ENCODE measurements at regions of chr9 and their contacts with region 1.

Region 1: GRCh38 chr9:114894801-114895433 is 35.5 kb downstream of the TNFSF8 start:
- DNase-seq: peak; percentile 77
- ATAC-seq: peak; percentile 76
- H3K4me3 Mint-ChIP-seq: peak overlapping the region; percentile 14
- H3K27ac Mint-ChIP-seq: peak overlapping the region; percentile 90
- H3K4me1 Mint-ChIP-seq: peaks cover 21% of the 10 kb centered on the region
- H3K27me3 Mint-ChIP-seq: no peaks in the 10 kb centered on the region

Region 2: DNA sequence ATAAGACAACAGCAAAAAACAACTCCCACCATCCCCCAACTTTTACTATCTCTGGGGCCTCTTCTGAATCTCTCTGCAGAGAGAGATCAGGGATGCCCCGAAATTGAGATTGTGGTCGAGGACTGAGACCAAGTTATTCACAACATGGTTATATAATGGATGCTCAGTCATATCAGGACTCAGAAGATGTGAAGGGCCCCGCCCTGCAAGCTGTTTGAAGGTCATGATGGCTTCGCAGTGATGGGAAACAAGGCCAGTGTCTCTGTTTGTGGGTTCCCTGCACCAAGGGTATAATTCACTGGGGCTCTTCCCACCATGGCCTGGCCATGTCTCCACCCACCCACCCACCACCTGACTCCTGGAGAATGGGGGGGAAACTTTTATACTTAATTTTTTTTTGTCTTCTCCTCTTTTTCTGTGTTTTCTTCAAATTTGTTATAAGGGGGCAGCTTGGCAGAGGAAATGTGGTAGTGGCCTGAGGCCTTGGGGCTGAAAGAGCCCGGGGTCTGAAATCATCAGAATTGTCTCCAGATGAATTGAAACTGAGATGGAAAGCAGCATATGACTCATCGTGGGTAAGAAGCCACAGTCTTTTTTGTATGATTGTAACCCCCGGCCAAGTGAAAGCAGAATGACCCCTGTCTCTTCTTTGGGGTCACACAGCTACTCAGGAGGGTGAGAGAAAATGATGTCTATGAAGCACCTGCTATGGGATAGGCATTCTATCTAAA is 197.9 kb before region 1 on chr9:
- CTCF ChIA-PET with region 1: interaction called, 3 read pairs
- POLR2A ChIA-PET with region 1: interaction called, 15 read pairs
- intact Hi-C with region 1: loop called in 1 of 2 experiments (anchors 1 kb)
- DNase-seq: peak; percentile 86
- ATAC-seq: peak; percentile 49
- H3K4me3 Mint-ChIP-seq: peak overlapping the region; percentile 28
- H3K27ac Mint-ChIP-seq: peak overlapping the region; percentile 89
- H3K4me1 Mint-ChIP-seq: peaks cover 89% of the 10 kb centered on the region
- H3K27me3 Mint-ChIP-seq: no peaks in the 10 kb centered on the region

Region 3: DNA sequence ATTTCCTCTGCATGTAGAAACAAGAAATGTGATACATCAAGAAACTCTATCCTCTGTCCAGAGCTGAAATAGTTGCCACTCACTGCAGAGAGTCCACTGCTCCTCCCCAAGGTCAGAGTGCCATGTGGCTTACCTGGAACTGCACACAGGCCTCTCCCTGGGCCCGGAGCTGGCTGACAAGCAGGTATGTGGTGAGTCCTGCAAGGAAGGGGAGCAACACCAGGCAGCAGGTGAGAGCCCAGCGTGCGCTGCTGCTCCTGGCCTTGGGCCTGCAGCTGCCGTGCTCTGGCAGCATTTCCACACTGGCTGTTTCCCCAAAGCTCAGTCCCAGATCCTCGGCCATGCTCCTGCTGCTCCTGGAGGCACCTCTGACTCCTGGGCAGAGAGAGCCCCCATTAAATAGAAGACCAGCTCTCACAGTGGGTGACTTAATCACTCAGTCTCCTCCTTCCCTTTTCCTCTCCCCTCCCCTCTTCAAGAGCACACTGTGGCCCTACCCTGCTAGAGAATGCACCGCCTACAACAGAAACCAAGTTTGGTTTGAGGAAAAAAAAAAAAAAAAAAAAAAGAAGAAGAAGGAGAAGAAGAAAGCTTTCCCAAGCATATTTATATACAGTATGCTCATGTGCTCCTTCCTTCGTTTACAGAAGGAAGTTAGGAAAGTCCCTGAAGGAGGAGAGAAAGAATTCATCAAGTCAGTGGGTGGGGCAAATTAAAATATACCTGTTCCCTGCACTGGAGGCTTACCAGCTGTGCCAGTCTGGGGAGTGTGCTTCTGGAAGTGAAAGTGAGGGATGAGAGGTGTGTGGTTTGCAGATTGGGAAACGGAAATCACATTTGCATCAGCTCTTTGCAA is 89.0 kb before region 1 on chr9 and contains the start of gene TNFSF15:
- CTCF ChIA-PET with region 1: no interaction called
- POLR2A ChIA-PET with region 1: no interaction called
- intact Hi-C with region 1: loop called in 1 of 2 experiments (anchors 5 kb)
- DNase-seq: peak; percentile 64
- ATAC-seq: peak; percentile 85
- H3K4me3 Mint-ChIP-seq: peak within 1 kb of the TSS; percentile 43
- H3K27ac Mint-ChIP-seq: peak within 1 kb of the TSS; percentile 68
- H3K4me1 Mint-ChIP-seq: peaks cover 25% of the 10 kb centered on the region
- H3K27me3 Mint-ChIP-seq: peaks cover 3% of the 10 kb centered on the region
- total RNA-seq, gene TNFSF15: 0.47 to 0.50 TPM

Region 4: GRCh38 chr9:114850871-114851270 is 44.0 kb before region 1 on chr9:
- CTCF ChIA-PET with region 1: no interaction called
- POLR2A ChIA-PET with region 1: no interaction called
- intact Hi-C with region 1: loop called in 1 of 2 experiments (anchors 2 kb)
- DNase-seq: peak; percentile 52
- ATAC-seq: peak; percentile 80
- H3K4me3 Mint-ChIP-seq: no peak overlapping the region
- H3K27ac Mint-ChIP-seq: peak overlapping the region; percentile 61
- H3K4me1 Mint-ChIP-seq: peaks cover 26% of the 10 kb centered on the region
- H3K27me3 Mint-ChIP-seq: no peaks in the 10 kb centered on the region

Region 5: DNA sequence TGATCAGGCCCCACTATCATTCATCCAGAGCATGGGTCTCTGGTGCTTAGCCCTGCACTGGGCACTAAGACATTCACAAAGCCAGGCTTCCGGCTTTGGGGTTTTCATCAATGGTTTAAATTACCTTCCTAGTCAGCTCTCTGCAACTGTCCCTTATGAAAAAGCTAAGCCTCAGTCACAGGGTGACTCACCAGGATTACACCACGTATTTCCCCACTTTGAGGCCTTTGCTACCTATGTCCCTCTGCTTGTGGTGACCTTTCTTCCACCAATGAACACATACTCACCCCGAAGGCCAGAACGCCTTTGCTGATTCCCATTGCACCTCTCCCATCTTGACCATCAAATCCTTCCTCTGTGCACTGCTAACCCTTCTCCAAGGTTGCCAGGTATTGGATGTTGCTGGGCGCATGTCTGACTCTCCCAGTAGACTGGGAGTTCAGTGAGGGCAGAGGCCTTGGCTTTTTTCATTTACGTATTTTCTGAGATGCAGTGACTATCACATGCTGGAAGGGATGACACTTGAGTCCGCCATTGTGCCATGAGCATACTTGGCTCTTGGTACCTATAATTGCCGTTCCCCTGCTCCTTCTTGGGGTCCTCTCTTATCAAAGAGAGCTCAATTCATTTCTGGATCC is 94.2 kb after region 1 on chr9:
- CTCF ChIA-PET with region 1: interaction called, 5 read pairs
- POLR2A ChIA-PET with region 1: interaction called, 10 read pairs
- intact Hi-C with region 1: loop called in 1 of 2 experiments (anchors 1 kb)
- DNase-seq: peak; percentile 64
- ATAC-seq: peak; percentile 63
- H3K4me3 Mint-ChIP-seq: peak overlapping the region; percentile 19
- H3K27ac Mint-ChIP-seq: peak overlapping the region; percentile 95
- H3K4me1 Mint-ChIP-seq: peaks cover 68% of the 10 kb centered on the region
- H3K27me3 Mint-ChIP-seq: no peaks in the 10 kb centered on the region

Region 6: DNA sequence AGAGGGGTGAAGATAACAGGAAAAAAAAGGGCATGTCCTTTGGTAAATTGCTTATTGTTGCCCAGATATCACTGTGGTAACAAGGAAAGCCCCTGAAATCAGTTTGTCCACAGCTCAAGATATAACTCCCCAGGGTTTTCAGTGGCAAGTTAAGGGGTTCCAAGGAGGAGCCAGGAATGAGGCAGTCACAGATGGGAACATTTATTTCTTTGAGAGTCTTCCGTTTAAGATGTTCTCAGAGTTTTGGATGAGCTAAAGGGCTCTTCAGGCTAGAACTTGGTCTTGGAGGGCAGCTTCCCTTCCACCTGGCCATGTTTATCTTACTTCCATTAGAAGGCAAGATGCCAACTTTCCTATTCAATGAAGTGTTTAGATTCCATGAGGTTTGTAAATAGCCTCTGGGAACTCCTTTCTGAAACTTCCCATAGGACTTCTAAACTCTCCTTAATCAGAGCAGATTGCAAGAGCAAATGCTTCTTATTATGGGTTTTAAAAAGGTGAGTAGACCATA is 500.6 kb after region 1 on chr9:
- CTCF ChIA-PET with region 1: no interaction called
- POLR2A ChIA-PET with region 1: no interaction called
- intact Hi-C with region 1: no loop called
- DNase-seq: no peak
- ATAC-seq: no peak
- H3K4me3 Mint-ChIP-seq: no peak overlapping the region
- H3K27ac Mint-ChIP-seq: no peak overlapping the region
- H3K4me1 Mint-ChIP-seq: no peaks in the 10 kb centered on the region
- H3K27me3 Mint-ChIP-seq: peaks cover 16% of the 10 kb centered on the region

Measured in activated CD4-positive, alpha-beta T cell treated with anti-CD3 and anti-CD28 coated beads for 36 hours (primary cell).